Activated CD4-positive, alpha-beta T cell treated with anti-CD3 and anti-CD28 coated beads, Interleukin-2, amount 10 ng/mL, durations not matched to agents 24 days and 14 days (primary cell): ENCODE measurements at regions of chr20 and their contacts with region 1.

Region 1: GRCh38 chr20:1776681-1777475 is 118.3 kb upstream of the SIRPA start:
- DNase-seq: peak; percentile 95
- H3K4me3 Mint-ChIP-seq: peak overlapping the region; percentile 84
- H3K27ac Mint-ChIP-seq: peak overlapping the region; percentile 66
- H3K4me1 Mint-ChIP-seq: peaks cover 11% of the 10 kb centered on the region
- H3K27me3 Mint-ChIP-seq: peaks cover 12% of the 10 kb centered on the region

Region 2: GRCh38 chr20:1503564-1504227 is 273.2 kb before region 1 on chr20:
- intact Hi-C with region 1: loop called (anchors 2 kb)
- DNase-seq: peak; percentile 92
- H3K4me3 Mint-ChIP-seq: no peak overlapping the region
- H3K27ac Mint-ChIP-seq: no peak overlapping the region
- H3K4me1 Mint-ChIP-seq: peaks cover 8% of the 10 kb centered on the region
- H3K27me3 Mint-ChIP-seq: peaks cover 49% of the 10 kb centered on the region

Region 3: GRCh38 chr20:1533059-1533458 is 243.8 kb before region 1 on chr20:
- intact Hi-C with region 1: loop called (anchors 2 kb)
- DNase-seq: peak; percentile 69
- H3K4me3 Mint-ChIP-seq: no peak overlapping the region
- H3K27ac Mint-ChIP-seq: no peak overlapping the region
- H3K4me1 Mint-ChIP-seq: peaks cover 5% of the 10 kb centered on the region
- H3K27me3 Mint-ChIP-seq: peaks cover 3% of the 10 kb centered on the region